Heart right ventricle (tissue), 16 donors: ENCODE measurements at regions of chr10 and their contacts with region 1.

Region 1: GRCh38 chr10:6108603-6109443 is 20.0 kb downstream of the RBM17 start:
- DNase-seq: no peak
- ATAC-seq: peak in 4 of 8 donors; percentile 18 to 42 (median 34)
- H3K4me3 ChIP-seq: no peak overlapping the region
- H3K27ac ChIP-seq: no peak overlapping the region
- H3K4me1 ChIP-seq: peaks cover 0 to 16% (median 11%) of the 10 kb centered on the region in 9 donors
- H3K27me3 ChIP-seq: no peaks in the 10 kb centered on the region
- CTCF ChIP-seq: peak; percentile 53 to 85 (median 75)

Region 2: DNA sequence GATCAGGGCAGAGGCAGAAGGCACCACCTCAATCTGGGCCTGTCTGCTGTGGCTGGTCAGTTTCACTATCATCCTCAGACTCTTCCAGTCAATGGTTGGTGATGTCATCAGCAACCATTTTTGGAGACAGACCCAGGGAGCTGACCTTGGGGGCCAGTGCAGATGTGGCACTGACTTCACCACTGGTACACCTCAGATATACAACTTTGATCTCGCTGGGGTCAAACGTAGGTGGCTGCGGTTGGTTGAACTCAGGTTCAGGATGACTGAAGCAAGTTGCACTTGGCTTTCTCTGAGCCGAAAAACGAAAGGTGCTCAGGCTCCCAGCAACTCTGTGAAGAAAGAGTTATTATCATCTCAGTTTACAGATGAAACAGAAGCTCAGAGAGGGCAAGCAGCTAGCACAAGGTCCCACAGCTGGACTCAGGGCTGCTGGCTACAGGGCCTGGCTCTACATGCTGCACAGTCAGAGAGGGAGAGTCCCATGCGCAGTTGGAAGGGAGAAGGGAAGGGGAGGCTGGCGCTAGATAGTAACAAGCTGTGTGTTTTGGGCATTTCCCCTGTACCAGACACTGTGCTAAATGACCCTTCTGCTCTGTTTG is 246.4 kb before region 1 on chr10:
- intact Hi-C with region 1: no loop called
- DNase-seq: no peak
- ATAC-seq: no peak
- H3K4me3 ChIP-seq: no peak overlapping the region
- H3K27ac ChIP-seq: no peak overlapping the region
- H3K4me1 ChIP-seq: peaks cover 0 to 7% (median 0%) of the 10 kb centered on the region in 9 donors
- H3K27me3 ChIP-seq: no peaks in the 10 kb centered on the region
- CTCF ChIP-seq: no peak

Region 3: GRCh38 chr10:6151087-6151977 is 42.5 kb after region 1 on chr10:
- intact Hi-C with region 1: loop called (anchors 2 to 5 kb)
- DNase-seq: peak; percentile 42 to 70
- ATAC-seq: peak; percentile 51 to 85 (median 80)
- H3K4me3 ChIP-seq: peak overlapping the region in 4 of 10 donors; percentile 5 to 29 (median 12)
- H3K27ac ChIP-seq: peak overlapping the region in 7 of 10 donors; percentile 20 to 88 (median 42)
- H3K4me1 ChIP-seq: peaks cover 0 to 57% (median 10%) of the 10 kb centered on the region in 9 donors
- H3K27me3 ChIP-seq: no peaks in the 10 kb centered on the region
- CTCF ChIP-seq: peak; percentile 22 to 78 (median 64)

Region 4: DNA sequence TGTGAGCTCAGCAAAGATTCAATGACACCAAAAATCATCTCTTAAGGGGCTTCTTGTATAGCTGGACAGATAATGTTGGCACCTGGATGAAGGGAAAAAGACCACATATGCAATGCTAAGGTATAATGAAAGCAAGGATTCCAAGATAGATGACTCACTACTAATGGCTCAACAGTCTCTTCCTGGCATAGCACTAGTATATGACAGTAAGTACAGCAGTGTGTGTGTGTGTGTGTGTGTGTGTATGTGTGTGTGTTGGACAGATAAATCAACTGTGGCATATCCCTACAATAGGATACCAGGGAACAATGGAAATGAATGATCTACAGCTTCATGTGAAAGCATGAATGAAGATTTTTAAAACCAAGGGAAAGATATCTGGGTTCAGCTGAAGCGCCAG is 1044.9 kb after region 1 on chr10:
- intact Hi-C with region 1: no loop called
- DNase-seq: no peak
- ATAC-seq: no peak
- H3K4me3 ChIP-seq: no peak overlapping the region
- H3K27ac ChIP-seq: no peak overlapping the region
- H3K4me1 ChIP-seq: peaks cover 0 to 14% (median 0%) of the 10 kb centered on the region in 9 donors
- H3K27me3 ChIP-seq: peaks cover 0 to 8% (median under 1%) of the 10 kb centered on the region in 7 donors
- CTCF ChIP-seq: no peak